ENCODE measurements at regions of chr3 and their contacts with region 1.

Region 1: GRCh38 chr3:13657660-13658435 is 108.9 kb downstream of the FBLN2 start:
- DNase-seq: peak; percentile 66
- H3K4me3 Mint-ChIP-seq: no peak overlapping the region
- H3K27ac Mint-ChIP-seq: no peak overlapping the region
- H3K4me1 Mint-ChIP-seq: peaks cover 12% of the 10 kb centered on the region
- H3K27me3 Mint-ChIP-seq: no peaks in the 10 kb centered on the region
- CTCF ChIP-seq: peak; percentile 95

Region 2: GRCh38 chr3:13484851-13485590 is 172.8 kb before region 1 on chr3:
- CTCF ChIA-PET with region 1: interaction called, 10 read pairs
- POLR2A ChIA-PET with region 1: no interaction called
- intact Hi-C with region 1: no loop called
- DNase-seq: peak; percentile 94
- H3K4me3 Mint-ChIP-seq: peak overlapping the region; percentile 28
- H3K27ac Mint-ChIP-seq: peak overlapping the region; percentile 92
- H3K4me1 Mint-ChIP-seq: peaks cover 18% of the 10 kb centered on the region
- H3K27me3 Mint-ChIP-seq: no peaks in the 10 kb centered on the region
- CTCF ChIP-seq: no peak

Region 3: DNA sequence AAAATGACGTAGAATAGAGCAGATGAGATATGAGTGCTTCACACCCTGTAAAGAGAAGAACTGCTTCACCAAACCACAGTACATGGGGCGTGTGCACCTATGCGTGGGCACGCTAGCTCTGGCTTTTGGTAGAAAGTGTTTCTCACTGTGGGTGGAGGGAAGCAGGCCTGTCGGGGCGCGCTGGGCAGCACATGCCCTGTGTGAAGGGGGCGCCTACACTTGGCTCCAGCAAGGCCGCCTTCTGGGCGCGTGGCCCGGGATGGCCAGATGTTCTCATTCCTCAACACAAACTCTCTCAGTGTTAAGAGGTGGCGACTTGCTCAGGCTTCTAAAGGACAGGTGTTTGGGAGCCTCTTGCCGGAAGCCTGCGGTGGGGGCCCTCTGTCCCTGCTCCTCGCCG is 18.9 kb before region 1 on chr3:
- CTCF ChIA-PET with region 1: interaction called, 10 read pairs
- POLR2A ChIA-PET with region 1: interaction called, 4 read pairs
- intact Hi-C with region 1: no loop called
- DNase-seq: no peak
- H3K4me3 Mint-ChIP-seq: no peak overlapping the region
- H3K27ac Mint-ChIP-seq: peak overlapping the region; percentile 47
- H3K4me1 Mint-ChIP-seq: peaks cover 12% of the 10 kb centered on the region
- H3K27me3 Mint-ChIP-seq: no peaks in the 10 kb centered on the region
- CTCF ChIP-seq: no peak

Region 4: GRCh38 chr3:13824521-13825310 is 166.9 kb after region 1 on chr3:
- CTCF ChIA-PET with region 1: interaction called, 22 read pairs
- POLR2A ChIA-PET with region 1: no interaction called
- intact Hi-C with region 1: no loop called
- DNase-seq: peak; percentile 13
- H3K4me3 Mint-ChIP-seq: no peak overlapping the region
- H3K27ac Mint-ChIP-seq: peak overlapping the region; percentile 40
- H3K4me1 Mint-ChIP-seq: peaks cover 38% of the 10 kb centered on the region
- H3K27me3 Mint-ChIP-seq: no peaks in the 10 kb centered on the region
- CTCF ChIP-seq: no peak

Region 5: GRCh38 chr3:13872451-13872850 is 214.6 kb after region 1 on chr3:
- CTCF ChIA-PET with region 1: interaction called, 12 read pairs
- POLR2A ChIA-PET with region 1: no interaction called
- intact Hi-C with region 1: no loop called
- DNase-seq: no peak
- H3K4me3 Mint-ChIP-seq: no peak overlapping the region
- H3K27ac Mint-ChIP-seq: no peak overlapping the region
- H3K4me1 Mint-ChIP-seq: no peaks in the 10 kb centered on the region
- H3K27me3 Mint-ChIP-seq: no peaks in the 10 kb centered on the region
- CTCF ChIP-seq: no peak

Region 6: GRCh38 chr3:13877911-13878280 is 220.0 kb after region 1 on chr3:
- CTCF ChIA-PET with region 1: interaction called, 597 read pairs
- POLR2A ChIA-PET with region 1: interaction called, 13 read pairs
- intact Hi-C with region 1: loop called (anchors 1 kb)
- DNase-seq: no peak
- H3K4me3 Mint-ChIP-seq: no peak overlapping the region
- H3K27ac Mint-ChIP-seq: no peak overlapping the region
- H3K4me1 Mint-ChIP-seq: no peaks in the 10 kb centered on the region
- H3K27me3 Mint-ChIP-seq: peaks cover 9% of the 10 kb centered on the region
- CTCF ChIP-seq: no peak